ENCODE measurements at regions of chr5 and their contacts with region 1.

Region 1: GRCh38 chr5:73215891-73216610 is 43.1 kb downstream of the TMEM174 start:
- DNase-seq: peak; percentile 87 to 89
- ATAC-seq: peak; percentile 93 to 97
- H3K4me3 ChIP-seq: peak overlapping the region; percentile 47
- H3K27ac ChIP-seq: peak overlapping the region; percentile 91 to 96
- H3K4me1 ChIP-seq: peaks cover 16% of the 10 kb centered on the region; the same call in 2 of the 3 replicates
- CTCF ChIP-seq: peak; percentile 82
- EP300 ChIP-seq: no peak
- POLR2A ChIP-seq: peak; percentile 56
- RAD21 ChIP-seq: peak; percentile 60 to 79

Region 2: GRCh38 chr5:73088026-73088425 is 128.0 kb before region 1 on chr5:
- CTCF ChIA-PET with region 1: interaction called, 47 read pairs
- POLR2A ChIA-PET with region 1: interaction called, 6 read pairs
- DNase-seq: no peak
- ATAC-seq: peak in 1 of 2 experiments; percentile 39; a peak in 1 of 6 replicates
- H3K4me3 ChIP-seq: no peak overlapping the region
- H3K27ac ChIP-seq: peak overlapping the region in 1 of 2 experiments; percentile 13; a peak in 2 of 6 replicates
- H3K4me1 ChIP-seq: peaks cover 22% of the 10 kb centered on the region
- CTCF ChIP-seq: no peak
- EP300 ChIP-seq: no peak
- POLR2A ChIP-seq: no peak
- RAD21 ChIP-seq: no peak

Region 3: GRCh38 chr5:73229209-73229661 is 13.2 kb after region 1 on chr5:
- CTCF ChIA-PET with region 1: interaction called, 39 read pairs
- POLR2A ChIA-PET with region 1: interaction called, 15 read pairs
- DNase-seq: no peak
- ATAC-seq: no peak
- H3K4me3 ChIP-seq: no peak overlapping the region
- H3K27ac ChIP-seq: no peak overlapping the region
- H3K4me1 ChIP-seq: no peaks in the 10 kb centered on the region
- CTCF ChIP-seq: no peak
- EP300 ChIP-seq: no peak
- POLR2A ChIP-seq: no peak
- RAD21 ChIP-seq: no peak

Region 4: DNA sequence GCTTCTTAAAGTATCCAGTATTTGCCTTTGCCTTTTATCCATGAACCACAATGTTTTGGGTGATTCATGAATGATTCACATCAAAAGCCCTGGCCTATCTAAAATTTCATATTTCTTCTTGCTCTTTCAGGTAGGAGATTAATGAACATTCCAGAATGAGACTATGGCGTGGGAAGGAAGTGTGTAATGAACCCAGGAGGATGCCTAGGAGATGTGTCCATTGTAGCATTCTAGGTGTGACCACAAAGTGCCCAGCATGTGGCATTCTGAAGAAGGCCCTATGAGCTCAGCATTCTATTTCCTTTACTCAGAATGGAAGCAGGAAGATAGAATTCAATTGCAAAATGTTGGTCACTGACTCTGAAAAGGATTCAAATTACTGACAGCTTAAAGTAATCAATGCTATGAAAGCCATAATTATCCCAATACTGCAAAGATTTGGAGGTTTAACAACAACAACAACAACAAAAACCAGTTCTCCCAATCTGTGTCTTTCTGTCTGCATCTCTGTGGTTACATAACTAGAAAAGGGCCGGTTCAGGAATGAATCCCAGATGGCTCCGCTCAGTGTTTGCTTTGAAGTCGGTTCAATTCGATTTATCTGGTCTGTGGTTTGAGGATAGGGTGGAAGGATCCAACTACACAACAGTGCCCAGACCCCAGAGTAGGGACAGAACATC is 105.8 kb after region 1 on chr5:
- CTCF ChIA-PET with region 1: interaction called, 17 read pairs
- POLR2A ChIA-PET with region 1: no interaction called
- DNase-seq: peak in 1 of 2 experiments; percentile 22
- ATAC-seq: peak in 1 of 2 experiments; percentile 40; a peak in 2 of 6 replicates
- H3K4me3 ChIP-seq: no peak overlapping the region
- H3K27ac ChIP-seq: peak overlapping the region in 1 of 2 experiments; percentile 42; a peak in 1 of 6 replicates
- H3K4me1 ChIP-seq: no peaks in the 10 kb centered on the region
- CTCF ChIP-seq: no peak
- EP300 ChIP-seq: no peak
- POLR2A ChIP-seq: no peak
- RAD21 ChIP-seq: no peak

Region 5: DNA sequence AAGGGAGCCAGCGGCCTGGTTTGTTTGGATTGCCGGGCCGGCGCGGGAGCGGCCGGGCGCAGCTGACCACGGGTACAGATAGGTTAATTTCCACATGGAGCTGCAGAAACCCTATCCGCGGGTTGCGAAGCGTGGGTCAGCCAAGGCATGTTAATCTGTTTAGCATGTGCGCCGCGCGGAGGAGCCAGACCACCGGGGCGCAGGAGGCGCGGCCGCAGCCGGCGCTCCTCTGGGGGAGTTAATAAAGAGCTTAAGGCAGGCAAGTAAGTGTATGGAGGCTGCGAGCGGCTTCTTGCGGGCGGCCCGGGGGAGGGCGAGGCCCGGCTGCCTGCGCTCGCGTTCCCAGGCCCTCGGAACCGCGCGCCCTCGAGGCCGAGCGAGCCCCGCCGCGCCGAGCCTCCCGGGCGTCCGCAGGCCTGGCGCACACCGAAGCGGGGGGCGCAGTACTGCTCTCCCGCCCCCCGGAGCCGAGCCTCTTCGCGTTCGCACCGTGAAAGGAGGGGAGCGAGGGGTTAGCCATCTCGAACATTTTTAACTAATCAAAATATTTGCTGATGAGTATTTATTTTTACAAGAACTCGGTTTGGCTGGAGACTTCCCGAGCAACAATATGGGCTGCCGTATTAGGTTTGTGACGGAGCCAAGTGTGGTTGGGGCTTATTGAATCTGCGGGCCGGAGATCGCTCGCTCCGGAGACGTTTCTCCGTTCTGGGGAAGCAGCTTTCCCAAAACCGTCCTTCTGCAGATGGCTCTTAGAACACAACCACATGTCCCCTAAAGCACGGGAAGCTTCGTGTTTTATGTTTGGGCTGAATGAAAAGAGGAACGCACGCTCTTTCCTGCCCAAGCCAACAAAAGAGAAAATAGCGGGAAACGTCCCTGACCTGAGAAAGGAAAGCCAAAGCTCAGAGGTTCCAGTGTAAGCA is 203.7 kb after region 1 on chr5:
- CTCF ChIA-PET with region 1: interaction called, 12 read pairs
- POLR2A ChIA-PET with region 1: interaction called, 4 read pairs
- DNase-seq: no peak
- ATAC-seq: no peak
- H3K4me3 ChIP-seq: no peak overlapping the region
- H3K27ac ChIP-seq: no peak overlapping the region
- H3K4me1 ChIP-seq: no peaks in the 10 kb centered on the region
- CTCF ChIP-seq: no peak
- EP300 ChIP-seq: no peak
- POLR2A ChIP-seq: no peak
- RAD21 ChIP-seq: no peak

Region 6: GRCh38 chr5:73454351-73455036 is 238.4 kb after region 1 on chr5:
- CTCF ChIA-PET with region 1: interaction called, 155 read pairs
- POLR2A ChIA-PET with region 1: interaction called, 86 read pairs
- DNase-seq: peak in 1 of 2 experiments; percentile 83
- ATAC-seq: peak; percentile 75 to 79
- H3K4me3 ChIP-seq: no peak overlapping the region
- H3K27ac ChIP-seq: no peak overlapping the region
- H3K4me1 ChIP-seq: 0 out of 3 replicates have a peak, but pooled peaks cover 4% of the 10 kb centered on the region
- CTCF ChIP-seq: peak; percentile 59
- EP300 ChIP-seq: no peak
- POLR2A ChIP-seq: no peak
- RAD21 ChIP-seq: peak; percentile 25 to 43; a peak in 3 of 5 replicates

Region 7: DNA sequence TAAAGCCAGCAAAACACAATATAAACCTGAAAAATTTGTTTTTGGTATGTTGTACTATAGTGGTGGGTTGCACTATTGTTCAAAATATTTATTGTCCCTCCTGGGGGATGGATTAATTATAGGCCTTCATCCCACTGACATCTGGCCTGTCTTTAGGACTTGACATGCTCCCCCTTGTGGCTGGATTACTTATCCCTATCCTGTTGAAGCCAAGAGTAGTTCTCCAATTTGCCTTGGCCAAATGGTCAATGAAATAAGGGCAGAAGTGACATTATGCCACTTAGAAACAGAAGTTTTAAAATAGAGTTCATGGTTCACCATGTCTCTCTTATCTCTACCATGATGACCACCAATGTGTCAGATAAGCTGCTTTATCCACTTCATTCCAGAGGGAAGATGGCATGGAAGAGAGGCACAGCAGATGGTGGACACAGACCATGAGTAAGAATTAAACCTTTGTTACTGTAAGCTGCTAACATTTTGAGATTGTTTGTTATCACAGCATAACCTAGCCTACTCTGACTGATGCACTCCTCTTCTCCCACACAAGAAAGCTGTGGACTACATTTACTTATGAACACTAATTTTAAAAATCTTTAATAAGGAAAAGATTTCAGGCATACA is 380.8 kb after region 1 on chr5:
- CTCF ChIA-PET with region 1: no interaction called
- POLR2A ChIA-PET with region 1: no interaction called
- DNase-seq: peak; percentile 40 to 78
- ATAC-seq: peak; percentile 80 to 92; a peak in 5 of 6 replicates
- H3K4me3 ChIP-seq: no peak overlapping the region
- H3K27ac ChIP-seq: no peak overlapping the region
- H3K4me1 ChIP-seq: peaks cover 23% of the 10 kb centered on the region
- CTCF ChIP-seq: peak; percentile 68
- EP300 ChIP-seq: no peak
- POLR2A ChIP-seq: no peak
- RAD21 ChIP-seq: peak; percentile 41 to 53; a peak in 4 of 5 replicates

Region 8: GRCh38 chr5:73633060-73633459 is 417.0 kb after region 1 on chr5:
- CTCF ChIA-PET with region 1: no interaction called
- POLR2A ChIA-PET with region 1: no interaction called
- DNase-seq: peak in 1 of 2 experiments; percentile 37
- ATAC-seq: peak in 1 of 2 experiments; percentile 70; a peak in 4 of 6 replicates
- H3K4me3 ChIP-seq: no peak overlapping the region
- H3K27ac ChIP-seq: no peak overlapping the region
- H3K4me1 ChIP-seq: peaks cover 47% of the 10 kb centered on the region
- CTCF ChIP-seq: no peak
- EP300 ChIP-seq: no peak
- POLR2A ChIP-seq: no peak
- RAD21 ChIP-seq: no peak